Activated T-helper 1 cell treated with anti-CD3 and anti-CD28 coated beads, Interleukin-12 subunit alpha, Interleukin-12 subunit beta, Interleukin-2, Interleukin-4 antibody, amounts not matched to agents 30 ng/mL and 10 ng/mL and 1 ng/mL, durations not matched to agents 14 hours and 24 hours and 36 hours (primary cell): ENCODE measurements at regions of chr9 and their contacts with region 1.

Region 1: GRCh38 chr9:74742792-74743730 is 144.7 kb downstream of the TRPM6 start:
- DNase-seq: no peak
- H3K4me3 Mint-ChIP-seq: no peak overlapping the region
- H3K27ac Mint-ChIP-seq: no peak overlapping the region
- H3K4me1 Mint-ChIP-seq: no peaks in the 10 kb centered on the region
- H3K27me3 Mint-ChIP-seq: peaks cover 16% of the 10 kb centered on the region

Region 2: GRCh38 chr9:73200694-73201452 is 1542.2 kb before region 1 on chr9:
- intact Hi-C with region 1: loop called (anchors 1 kb)
- DNase-seq: no peak
- H3K4me3 Mint-ChIP-seq: no peak overlapping the region
- H3K27ac Mint-ChIP-seq: no peak overlapping the region
- H3K4me1 Mint-ChIP-seq: no peaks in the 10 kb centered on the region
- H3K27me3 Mint-ChIP-seq: peaks cover 6% of the 10 kb centered on the region

Region 3: DNA sequence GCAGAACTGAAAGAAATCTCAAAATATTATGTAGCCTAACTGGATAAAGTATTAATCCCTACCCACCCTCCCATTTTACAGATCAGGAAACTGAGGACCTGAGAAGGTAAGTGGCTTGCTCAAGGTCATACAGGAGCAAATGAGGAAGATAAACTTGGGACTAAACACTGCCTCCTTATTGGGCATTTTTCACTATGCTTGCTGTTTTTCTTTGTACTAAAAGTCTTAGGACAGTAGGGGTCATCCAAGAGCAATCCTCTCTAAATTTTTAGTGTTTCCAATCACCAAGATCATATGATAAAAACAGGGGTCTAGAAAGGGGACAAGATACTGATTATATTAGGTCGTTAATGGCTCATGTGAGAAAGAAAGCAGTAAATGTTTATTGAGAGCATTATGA is 165.1 kb before region 1 on chr9:
- intact Hi-C with region 1: loop called (anchors 1 kb)
- DNase-seq: no peak
- H3K4me3 Mint-ChIP-seq: no peak overlapping the region
- H3K27ac Mint-ChIP-seq: no peak overlapping the region
- H3K4me1 Mint-ChIP-seq: no peaks in the 10 kb centered on the region
- H3K27me3 Mint-ChIP-seq: no peaks in the 10 kb centered on the region